Ascending aorta (tissue), 2 donors: ENCODE measurements at regions of chr4 and their contacts with region 1.

Region 1: GRCh38 chr4:2843263-2843940 is at the start of gene ADD1:
- DNase-seq: peak; percentile 67 to 96
- H3K4me3 ChIP-seq: peak within 1 kb of the TSS; percentile 87 to 90
- H3K27ac ChIP-seq: peak within 1 kb of the TSS; percentile 93 to 96
- H3K4me1 ChIP-seq: peaks cover 3 to 31% of the 10 kb centered on the region in 2 donors
- H3K27me3 ChIP-seq: no peaks in the 10 kb centered on the region
- CTCF ChIP-seq: no peak
- total RNA-seq, gene ADD1: 261 TPM

Region 2: DNA sequence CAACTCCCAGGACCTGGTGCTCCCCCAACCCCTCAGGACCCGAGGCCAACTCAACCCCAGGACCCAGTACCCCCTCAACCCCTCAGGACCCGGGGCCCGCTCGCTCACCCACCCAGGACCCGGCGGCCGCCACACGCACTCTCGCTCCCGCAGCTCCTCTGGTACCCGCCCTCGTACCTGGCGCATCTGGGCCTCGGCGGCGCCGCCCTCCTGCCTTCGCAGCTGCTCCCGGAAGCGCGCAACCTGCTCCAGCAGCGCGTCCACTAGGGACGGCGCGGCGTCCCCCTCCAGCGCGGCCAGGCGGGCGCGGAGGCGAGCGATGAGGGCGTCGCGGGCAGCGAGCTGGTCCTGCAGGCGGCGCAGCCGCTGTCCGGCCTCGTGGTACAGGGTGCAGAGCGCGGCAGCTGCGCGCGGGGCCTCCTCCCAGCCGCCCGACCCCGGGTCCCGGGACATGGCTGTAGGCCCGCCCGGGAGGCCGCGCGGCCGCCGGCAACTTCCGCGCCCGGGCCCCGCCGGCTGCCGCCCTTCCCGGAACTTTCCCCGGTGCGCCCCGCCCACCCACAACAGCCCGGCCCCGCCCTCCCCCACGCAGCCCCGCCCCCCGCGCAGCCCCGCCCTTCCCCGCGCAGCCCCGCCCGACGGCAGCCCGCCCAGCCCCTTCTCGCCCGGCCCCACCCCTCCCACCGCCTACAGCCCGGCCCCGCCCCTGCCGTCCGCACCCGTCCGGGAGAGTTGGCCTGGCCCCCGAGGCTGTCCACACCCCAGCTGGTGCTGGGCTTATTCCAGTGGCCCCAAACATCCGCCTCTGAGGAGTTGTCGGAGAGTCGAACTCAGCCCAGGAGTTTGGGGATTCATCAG is 87.3 kb before region 1 on chr4 and contains the start of gene TNIP2:
- intact Hi-C with region 1: loop called (anchors 2 kb)
- DNase-seq: peak in 1 of 2 donors; percentile 92
- H3K4me3 ChIP-seq: peak within 1 kb of the TSS; percentile 90 to 95
- H3K27ac ChIP-seq: peak within 1 kb of the TSS; percentile 82 to 87
- H3K4me1 ChIP-seq: peaks cover 4 to 10% of the 10 kb centered on the region in 2 donors
- H3K27me3 ChIP-seq: no peaks in the 10 kb centered on the region
- CTCF ChIP-seq: peak; percentile 11 to 59 (median 28)
- total RNA-seq, gene TNIP2: 65.6 TPM

Region 3: DNA sequence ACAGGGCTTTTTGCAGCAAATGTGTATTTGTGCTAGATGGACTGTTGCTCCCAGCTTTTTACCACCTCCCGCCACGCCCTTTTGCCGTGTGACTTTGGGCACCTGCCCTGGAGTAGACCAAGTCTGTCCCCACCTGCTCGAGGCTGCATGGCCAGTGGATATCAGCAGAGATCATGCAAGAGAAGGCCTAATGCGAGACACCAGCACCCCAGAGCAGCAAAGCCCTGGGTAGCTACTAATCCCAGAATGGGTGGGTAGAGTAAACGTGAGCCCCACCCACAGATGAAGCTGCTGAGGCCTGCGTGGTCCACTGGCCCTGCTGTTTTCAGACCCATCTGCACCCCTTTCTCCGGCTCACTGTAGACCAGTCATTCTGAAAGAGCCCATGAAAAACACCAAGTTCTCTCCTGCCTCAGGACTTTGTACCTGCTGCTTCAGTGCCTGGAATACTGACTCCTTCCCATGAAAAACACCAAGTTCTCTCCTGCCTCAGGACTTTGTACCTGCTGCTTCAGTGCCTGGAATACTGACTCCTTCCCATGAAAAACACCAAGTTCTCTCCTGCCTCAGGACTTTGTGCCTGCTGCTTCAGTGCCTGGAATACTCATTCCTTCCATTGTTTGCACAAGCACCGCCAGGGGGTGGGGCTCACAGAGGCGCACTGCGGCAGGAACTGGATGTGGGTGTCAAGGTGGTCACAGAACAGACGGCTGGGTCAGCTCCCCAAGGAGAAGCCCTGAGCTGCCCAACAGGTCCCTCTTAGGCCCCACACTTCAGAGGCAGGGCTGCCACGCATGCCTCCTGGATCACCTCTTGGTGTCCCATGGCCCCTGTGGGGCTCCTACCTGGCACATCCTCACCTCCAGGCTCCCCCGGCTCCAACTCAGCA is 82.1 kb before region 1 on chr4:
- intact Hi-C with region 1: loop called (anchors 1 kb)
- DNase-seq: no peak
- H3K4me3 ChIP-seq: no peak overlapping the region
- H3K27ac ChIP-seq: peak overlapping the region in 1 of 2 donors; percentile 63
- H3K4me1 ChIP-seq: peaks cover 0 to 3% of the 10 kb centered on the region in 2 donors
- H3K27me3 ChIP-seq: no peaks in the 10 kb centered on the region
- CTCF ChIP-seq: no peak

Region 4: GRCh38 chr4:2792711-2793585 is 50.5 kb before region 1 on chr4 and contains the start of gene SH3BP2:
- intact Hi-C with region 1: loop called (anchors 5 kb)
- DNase-seq: peak in 1 of 2 donors; percentile 89
- H3K4me3 ChIP-seq: peak within 1 kb of the TSS; percentile 81 to 87
- H3K27ac ChIP-seq: peak within 1 kb of the TSS; percentile 61 to 68
- H3K4me1 ChIP-seq: peaks cover 16 to 25% of the 10 kb centered on the region in 2 donors
- H3K27me3 ChIP-seq: no peaks in the 10 kb centered on the region
- CTCF ChIP-seq: no peak
- total RNA-seq, gene SH3BP2: 70.6 TPM

Region 5: GRCh38 chr4:2934813-2935761 is 91.7 kb after region 1 on chr4:
- intact Hi-C with region 1: loop called (anchors 1 kb)
- DNase-seq: peak; percentile 72 to 95
- H3K4me3 ChIP-seq: peak overlapping the region; percentile 59 to 76
- H3K27ac ChIP-seq: peak overlapping the region; percentile 77 to 79
- H3K4me1 ChIP-seq: peaks cover 0 to 21% of the 10 kb centered on the region in 2 donors
- H3K27me3 ChIP-seq: no peaks in the 10 kb centered on the region
- CTCF ChIP-seq: no peak